ENCODE measurements at regions of chr2 and their contacts with region 1.

Region 1: DNA sequence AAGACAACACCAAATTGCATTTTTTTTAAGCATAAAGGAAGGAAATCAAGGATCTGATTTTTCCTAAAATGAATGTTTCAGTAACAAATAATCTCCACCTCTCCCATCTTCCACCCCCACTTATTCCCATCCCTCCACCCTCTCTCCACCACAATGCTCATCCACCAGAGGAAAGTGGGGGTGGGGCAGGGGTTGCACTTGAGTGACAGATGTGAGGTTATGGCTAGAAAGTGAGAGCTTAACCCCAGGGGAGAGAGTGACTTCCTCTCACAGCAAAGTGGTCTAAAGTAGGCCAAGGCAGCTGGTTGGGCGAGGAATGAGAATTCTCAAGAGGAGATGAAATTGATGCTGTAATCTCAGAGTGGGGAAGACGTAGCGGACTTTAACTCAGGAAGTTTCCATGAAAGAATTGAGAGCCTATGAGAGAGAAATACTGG is 104.7 kb downstream of the HNRNPLL start:
- DNase-seq: no peak
- H3K4me3 ChIP-seq: no peak overlapping the region
- H3K27ac ChIP-seq: no peak overlapping the region
- H3K4me1 ChIP-seq: peaks cover 0 to 5% of the 10 kb centered on the region in 2 donors
- H3K27me3 ChIP-seq: no peaks in the 10 kb centered on the region
- CTCF ChIP-seq: no peak
- POLR2A ChIP-seq: no peak

Region 2: DNA sequence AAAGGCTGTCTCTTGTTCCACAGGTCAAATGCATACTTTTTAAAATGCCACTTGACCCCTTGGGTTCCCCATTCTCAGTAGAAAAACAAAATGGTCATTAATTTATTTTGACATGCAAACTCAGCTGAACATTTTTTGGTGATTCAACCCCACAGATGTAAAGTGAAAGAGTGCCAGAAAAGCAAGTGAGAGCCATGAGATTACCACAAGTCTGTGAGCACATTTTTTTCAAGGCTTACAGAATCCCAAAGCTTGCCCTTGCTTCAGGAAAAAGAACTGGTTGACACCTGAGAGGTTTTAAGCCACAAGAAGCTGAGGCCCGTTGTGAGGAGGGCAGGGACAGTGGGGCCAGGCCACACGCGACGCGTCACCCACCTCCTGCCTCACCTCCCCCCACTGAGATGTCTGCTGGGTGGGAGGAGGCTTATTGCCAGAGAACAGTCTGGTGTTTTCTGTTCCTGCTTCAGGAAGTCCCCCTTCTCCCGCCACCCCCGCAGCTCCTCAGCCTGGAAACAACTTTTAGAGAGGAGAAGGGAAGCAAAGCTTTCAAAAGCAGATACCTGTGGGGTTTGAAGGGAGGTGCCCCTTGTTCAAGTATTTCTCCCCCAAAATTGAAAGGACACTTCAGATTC is 351.7 kb before region 1 on chr2:
- intact Hi-C with region 1: no loop called
- DNase-seq: peak in 1 of 2 donors; percentile 49
- H3K4me3 ChIP-seq: peak overlapping the region in 1 of 3 donors; percentile 9
- H3K27ac ChIP-seq: peak overlapping the region; percentile 83 to 95
- H3K4me1 ChIP-seq: peaks cover 3 to 10% of the 10 kb centered on the region in 2 donors
- H3K27me3 ChIP-seq: no peaks in the 10 kb centered on the region
- CTCF ChIP-seq: no peak
- POLR2A ChIP-seq: no peak

Region 3: GRCh38 chr2:38560092-38560491 is 62.0 kb after region 1 on chr2:
- intact Hi-C with region 1: loop called (anchors 2 kb)
- DNase-seq: no peak
- H3K4me3 ChIP-seq: no peak overlapping the region
- H3K27ac ChIP-seq: no peak overlapping the region
- H3K4me1 ChIP-seq: no peaks in the 10 kb centered on the region
- H3K27me3 ChIP-seq: no peaks in the 10 kb centered on the region
- CTCF ChIP-seq: no peak
- POLR2A ChIP-seq: no peak

Region 4: DNA sequence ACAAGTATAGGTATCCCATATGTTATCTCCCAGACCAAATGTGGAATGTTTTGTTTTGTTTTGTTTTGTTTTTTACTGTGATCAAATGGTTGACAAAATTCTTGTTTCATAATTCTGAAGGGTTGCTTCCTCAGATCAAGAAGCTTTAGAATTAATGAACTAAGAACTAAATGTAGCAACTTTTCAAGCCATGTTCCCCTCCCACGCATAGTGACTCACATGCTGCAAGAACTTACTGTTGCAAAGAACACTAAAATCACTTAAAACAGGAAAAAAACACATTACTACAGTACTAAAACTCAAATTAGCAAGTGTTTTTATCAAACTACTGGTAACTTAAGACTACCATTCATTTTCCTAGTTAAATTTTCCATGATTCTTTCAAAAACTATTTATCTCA is 74.1 kb after region 1 on chr2:
- intact Hi-C with region 1: loop called (anchors 2 kb)
- DNase-seq: no peak
- H3K4me3 ChIP-seq: no peak overlapping the region
- H3K27ac ChIP-seq: no peak overlapping the region
- H3K4me1 ChIP-seq: no peaks in the 10 kb centered on the region
- H3K27me3 ChIP-seq: no peaks in the 10 kb centered on the region
- CTCF ChIP-seq: no peak
- POLR2A ChIP-seq: no peak

Region 5: DNA sequence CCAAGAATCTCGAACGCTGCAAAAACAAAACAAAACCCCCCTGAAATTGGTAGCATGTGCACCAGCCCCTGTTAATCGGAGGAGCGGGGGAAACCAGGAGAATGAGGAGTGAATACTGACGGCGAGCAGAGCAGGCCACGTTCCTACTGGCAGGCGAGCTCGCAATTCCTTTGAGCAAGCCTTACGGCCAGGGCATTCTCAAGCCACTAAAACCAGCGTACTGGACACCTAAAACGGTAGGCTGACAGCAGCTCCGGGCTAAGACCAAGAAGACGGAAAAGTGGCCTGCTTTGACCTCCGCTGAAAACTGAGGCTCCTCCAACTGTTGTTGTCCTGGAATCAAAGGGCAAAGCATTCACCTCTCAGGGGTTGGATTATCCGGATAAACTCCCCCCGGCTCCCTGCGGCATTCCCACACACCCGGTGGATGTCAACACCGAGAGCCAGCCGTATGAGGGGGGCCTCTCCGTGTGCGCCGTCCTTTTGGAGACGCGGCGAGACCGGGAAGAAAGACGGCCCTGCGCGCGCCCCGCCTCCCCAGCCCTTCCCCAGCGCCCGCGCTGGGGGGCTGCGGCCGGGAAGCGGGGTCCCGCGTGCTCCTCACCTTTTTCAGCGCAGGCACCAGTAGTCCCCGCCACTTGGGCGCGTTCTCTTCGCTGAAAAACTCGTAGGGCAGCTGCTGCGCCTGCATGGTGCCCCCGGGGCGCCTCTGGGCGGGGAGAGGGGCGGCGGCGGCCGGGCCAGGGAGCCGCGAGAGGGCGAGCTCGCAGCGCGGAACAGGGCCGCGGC is 621.9 kb after region 1 on chr2:
- intact Hi-C with region 1: no loop called
- DNase-seq: peak in 1 of 2 donors; percentile 36
- H3K4me3 ChIP-seq: peak overlapping the region; percentile 84 to 89 (median 86)
- H3K27ac ChIP-seq: peak overlapping the region; percentile 95 to 99
- H3K4me1 ChIP-seq: peaks cover 0 to 14% of the 10 kb centered on the region in 2 donors
- H3K27me3 ChIP-seq: no peaks in the 10 kb centered on the region
- CTCF ChIP-seq: no peak
- POLR2A ChIP-seq: no peak